CD8-positive, alpha-beta memory T cell (primary cell): ENCODE measurements at regions of chr1 and their contacts with region 1.

Region 1: DNA sequence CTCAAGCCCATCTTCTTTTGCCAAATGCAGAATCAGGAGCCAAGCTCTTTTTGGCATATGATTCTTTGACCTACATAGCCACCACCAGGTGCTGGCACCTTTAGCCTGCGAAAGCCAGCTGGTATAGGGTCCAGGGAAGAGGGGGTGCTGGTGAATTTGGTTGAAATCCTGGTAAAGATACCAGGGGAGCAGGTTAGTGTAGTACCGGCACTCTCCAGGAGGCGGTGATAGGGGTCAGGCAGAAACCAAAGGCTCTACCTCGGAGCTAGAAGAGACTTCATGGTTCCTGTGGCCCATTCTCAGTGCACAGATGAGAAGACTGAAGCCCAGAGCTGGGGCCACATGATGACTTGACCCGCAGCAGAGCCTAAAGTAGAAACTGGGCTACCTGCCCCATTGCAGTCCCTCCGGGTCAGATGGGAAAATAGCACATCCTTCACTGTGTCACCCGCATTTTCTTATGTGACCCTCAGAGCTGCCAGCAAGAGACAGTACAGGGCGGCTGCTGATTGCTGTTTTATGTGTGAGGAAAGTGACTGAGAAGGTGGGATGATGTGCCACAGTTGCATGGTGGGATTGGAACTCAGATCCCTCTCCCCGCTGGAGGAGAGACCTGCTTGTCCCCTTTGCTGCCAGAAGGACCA is 36.0 kb upstream of the IL19 start:
- DNase-seq: peak; percentile 66 to 80 (median 74)
- H3K4me3 ChIP-seq: no peak overlapping the region
- H3K4me3 Mint-ChIP-seq: peak overlapping the region in 6 of 7 donors; percentile 7 to 79 (median 54)
- H3K27ac ChIP-seq: no peak overlapping the region
- H3K27ac Mint-ChIP-seq: peak overlapping the region; percentile 86 to 98 (median 92)
- H3K4me1 ChIP-seq: peaks cover 55% of the 10 kb centered on the region
- H3K4me1 Mint-ChIP-seq: peaks cover 60 to 62% (median 62%) of the 10 kb centered on the region in 3 donors
- H3K27me3 ChIP-seq: no peaks in the 10 kb centered on the region
- H3K27me3 Mint-ChIP-seq: no peaks in the 10 kb centered on the region

Region 2: DNA sequence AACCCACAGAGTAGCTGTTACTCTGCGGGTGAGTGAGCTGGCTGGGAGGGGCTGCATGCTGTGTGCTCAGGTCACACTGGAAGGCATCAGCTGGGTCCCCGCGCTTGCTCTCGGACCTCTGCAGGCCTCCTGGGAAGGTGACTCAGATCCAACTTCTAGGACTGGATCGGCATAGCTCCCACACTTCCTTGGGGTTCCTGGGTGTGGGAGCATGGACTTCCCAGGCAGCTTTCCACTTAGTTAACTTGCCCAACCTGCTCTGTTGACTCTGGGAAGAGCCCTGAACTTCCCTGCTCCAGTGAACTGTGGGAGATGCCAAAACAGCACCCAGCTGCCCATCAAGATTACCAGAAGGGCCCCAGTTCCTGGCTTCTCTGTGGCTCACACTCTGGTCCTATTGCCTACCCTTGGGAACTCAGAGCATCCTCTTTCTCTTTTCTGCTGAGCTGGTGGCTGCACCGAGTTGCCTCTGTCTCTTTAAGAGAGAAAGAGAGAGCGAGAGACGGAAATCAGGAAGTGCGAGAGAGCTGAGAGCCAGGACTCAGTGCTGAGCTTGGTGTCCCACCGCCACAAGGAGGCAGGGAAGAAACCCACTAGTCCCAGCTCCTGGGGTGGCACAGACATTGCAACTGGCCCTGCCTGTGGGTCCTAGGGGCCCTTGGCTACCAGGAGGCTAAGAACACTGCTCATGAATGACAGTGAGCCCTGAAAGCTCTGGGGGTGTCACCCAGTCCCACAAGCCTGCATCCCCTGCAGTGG is 264.5 kb before region 1 on chr1 and contains the start of gene IKBKE:
- CTCF ChIA-PET with region 1: no interaction called
- POLR2A ChIA-PET with region 1: no interaction called
- DNase-seq: peak; percentile 27 to 70 (median 39)
- H3K4me3 ChIP-seq: peak within 1 kb of the TSS; percentile 96
- H3K4me3 Mint-ChIP-seq: peak within 1 kb of the TSS; percentile 89 to 97 (median 93)
- H3K27ac ChIP-seq: peak within 1 kb of the TSS; percentile 76
- H3K27ac Mint-ChIP-seq: peak within 1 kb of the TSS; percentile 77 to 97 (median 92)
- H3K4me1 ChIP-seq: peaks cover 74% of the 10 kb centered on the region
- H3K4me1 Mint-ChIP-seq: peaks cover 72 to 89% (median 78%) of the 10 kb centered on the region in 3 donors
- H3K27me3 ChIP-seq: no peaks in the 10 kb centered on the region
- H3K27me3 Mint-ChIP-seq: no peaks in the 10 kb centered on the region
- total RNA-seq, gene IKBKE: 17.1 to 18.4 TPM

Region 3: DNA sequence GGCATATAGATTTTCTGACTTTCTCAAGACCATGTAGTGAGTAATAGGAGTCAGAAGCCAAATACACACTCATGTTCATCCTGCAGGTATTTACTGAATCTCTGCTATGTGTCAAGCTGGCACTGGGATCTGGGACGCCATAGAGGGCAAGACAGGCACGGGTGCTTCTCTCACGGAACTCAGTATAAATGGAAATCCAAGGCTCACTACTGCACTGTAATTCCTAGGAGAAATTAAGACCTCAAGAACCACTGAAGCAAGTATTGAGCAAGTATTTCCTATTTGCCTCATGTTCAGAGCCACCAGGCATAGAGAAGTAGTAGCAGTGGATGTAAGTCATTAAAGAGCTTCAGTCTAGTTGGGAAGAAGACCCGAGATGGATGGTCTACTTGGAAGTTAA is 161.3 kb before region 1 on chr1:
- CTCF ChIA-PET with region 1: no interaction called
- POLR2A ChIA-PET with region 1: no interaction called
- DNase-seq: no peak
- H3K4me3 ChIP-seq: no peak overlapping the region
- H3K4me3 Mint-ChIP-seq: peak overlapping the region in 6 of 7 donors; percentile 22 to 73 (median 42)
- H3K27ac ChIP-seq: no peak overlapping the region
- H3K27ac Mint-ChIP-seq: peak overlapping the region; percentile 48 to 100 (median 98)
- H3K4me1 ChIP-seq: peaks cover 99% of the 10 kb centered on the region
- H3K4me1 Mint-ChIP-seq: peaks cover 92 to 100% (median 99%) of the 10 kb centered on the region in 3 donors
- H3K27me3 ChIP-seq: no peaks in the 10 kb centered on the region
- H3K27me3 Mint-ChIP-seq: no peaks in the 10 kb centered on the region

Region 4: GRCh38 chr1:206583707-206584648 is 150.6 kb before region 1 on chr1:
- CTCF ChIA-PET with region 1: no interaction called
- POLR2A ChIA-PET with region 1: no interaction called
- DNase-seq: peak; percentile 76 to 86 (median 80)
- H3K4me3 ChIP-seq: peak overlapping the region; percentile 22
- H3K4me3 Mint-ChIP-seq: peak overlapping the region; percentile 59 to 92 (median 88)
- H3K27ac ChIP-seq: peak overlapping the region; percentile 78
- H3K27ac Mint-ChIP-seq: peak overlapping the region; percentile 92 to 100 (median 98)
- H3K4me1 ChIP-seq: peaks cover 51% of the 10 kb centered on the region
- H3K4me1 Mint-ChIP-seq: peaks cover 58 to 84% (median 72%) of the 10 kb centered on the region in 3 donors
- H3K27me3 ChIP-seq: no peaks in the 10 kb centered on the region
- H3K27me3 Mint-ChIP-seq: peaks cover 0 to 1% of the 10 kb centered on the region in 2 donors

Region 5: GRCh38 chr1:206761159-206761768 is 26.6 kb after region 1 on chr1:
- CTCF ChIA-PET with region 1: interaction called, 42 read pairs
- POLR2A ChIA-PET with region 1: interaction called, 4 read pairs
- DNase-seq: no peak
- H3K4me3 ChIP-seq: no peak overlapping the region
- H3K4me3 Mint-ChIP-seq: no peak overlapping the region
- H3K27ac ChIP-seq: no peak overlapping the region
- H3K27ac Mint-ChIP-seq: peak overlapping the region in 1 of 8 donors; percentile 51
- H3K4me1 ChIP-seq: peaks cover 45% of the 10 kb centered on the region
- H3K4me1 Mint-ChIP-seq: peaks cover 20 to 42% (median 39%) of the 10 kb centered on the region in 3 donors
- H3K27me3 ChIP-seq: no peaks in the 10 kb centered on the region
- H3K27me3 Mint-ChIP-seq: no peaks in the 10 kb centered on the region

Region 6: GRCh38 chr1:206803221-206803730 is 68.7 kb after region 1 on chr1:
- CTCF ChIA-PET with region 1: interaction called, 232 read pairs
- POLR2A ChIA-PET with region 1: interaction called, 13 read pairs
- DNase-seq: peak; percentile 63 to 94 (median 91)
- H3K4me3 ChIP-seq: no peak overlapping the region
- H3K4me3 Mint-ChIP-seq: peak overlapping the region; percentile 2 to 73 (median 27)
- H3K27ac ChIP-seq: peak overlapping the region; percentile 41
- H3K27ac Mint-ChIP-seq: peak overlapping the region; percentile 85 to 99 (median 96)
- H3K4me1 ChIP-seq: peaks cover 55% of the 10 kb centered on the region
- H3K4me1 Mint-ChIP-seq: peaks cover 56 to 74% (median 73%) of the 10 kb centered on the region in 3 donors
- H3K27me3 ChIP-seq: no peaks in the 10 kb centered on the region
- H3K27me3 Mint-ChIP-seq: peaks cover 0 to 2% of the 10 kb centered on the region in 2 donors

Region 7: DNA sequence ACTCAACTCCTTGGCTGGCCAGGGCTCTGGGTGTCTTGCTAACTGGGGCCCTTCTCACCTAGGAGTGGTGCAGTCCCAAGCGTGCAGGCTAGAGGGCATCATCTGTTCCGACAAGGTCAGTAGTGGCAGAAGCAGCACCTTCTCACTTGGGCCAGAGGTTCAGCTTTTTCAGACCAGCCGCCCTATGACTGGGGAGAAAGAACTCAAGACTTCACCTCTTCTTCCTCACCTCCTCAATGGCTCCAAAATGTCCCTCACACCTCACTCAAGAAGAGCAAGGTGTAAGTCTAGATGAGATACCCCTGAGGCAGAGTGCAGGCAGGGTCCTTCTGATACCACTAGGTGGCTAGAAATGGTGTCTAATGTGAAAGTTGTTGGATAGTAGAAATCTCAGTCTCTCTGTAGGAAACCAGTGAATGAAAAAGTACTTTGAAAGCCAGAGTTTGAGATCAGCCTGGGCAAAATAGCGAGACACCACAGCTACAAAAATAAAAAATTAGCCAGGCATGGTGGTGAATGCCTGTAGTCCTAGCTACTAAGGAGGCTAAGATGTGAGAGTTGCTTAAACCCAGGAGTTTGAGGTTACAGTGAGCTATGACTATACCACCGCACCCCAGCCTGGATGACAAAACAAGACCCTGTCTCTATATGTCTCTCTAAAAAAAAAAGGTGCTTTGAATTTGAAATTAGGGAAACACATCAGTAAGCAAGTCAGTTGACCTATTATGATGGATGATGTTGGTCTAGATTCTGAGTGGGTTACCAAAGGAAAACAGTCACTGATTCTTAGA is 122.2 kb after region 1 on chr1:
- CTCF ChIA-PET with region 1: interaction called, 13 read pairs
- POLR2A ChIA-PET with region 1: no interaction called
- DNase-seq: peak in 1 of 5 donors; percentile 28
- H3K4me3 ChIP-seq: no peak overlapping the region
- H3K4me3 Mint-ChIP-seq: no peak overlapping the region
- H3K27ac ChIP-seq: no peak overlapping the region
- H3K27ac Mint-ChIP-seq: peak overlapping the region in 2 of 8 donors; percentile 13 to 14
- H3K4me1 ChIP-seq: peaks cover 9% of the 10 kb centered on the region
- H3K4me1 Mint-ChIP-seq: peaks cover 3 to 5% (median 3%) of the 10 kb centered on the region in 3 donors
- H3K27me3 ChIP-seq: no peaks in the 10 kb centered on the region
- H3K27me3 Mint-ChIP-seq: peaks cover 11 to 15% of the 10 kb centered on the region in 2 donors

Region 8: GRCh38 chr1:206918076-206918475 is 183.5 kb after region 1 on chr1:
- CTCF ChIA-PET with region 1: interaction called, 64 read pairs
- POLR2A ChIA-PET with region 1: interaction called, 5 read pairs
- DNase-seq: no peak
- H3K4me3 ChIP-seq: peak overlapping the region; percentile 81
- H3K4me3 Mint-ChIP-seq: no peak overlapping the region
- H3K27ac ChIP-seq: no peak overlapping the region
- H3K27ac Mint-ChIP-seq: peak overlapping the region in 6 of 8 donors; percentile 79 to 96 (median 94)
- H3K4me1 ChIP-seq: peaks cover 70% of the 10 kb centered on the region
- H3K4me1 Mint-ChIP-seq: peaks cover 68 to 71% (median 70%) of the 10 kb centered on the region in 3 donors
- H3K27me3 ChIP-seq: no peaks in the 10 kb centered on the region
- H3K27me3 Mint-ChIP-seq: peaks cover 0 to 1% of the 10 kb centered on the region in 2 donors